ENCODE measurements at regions of chr14 and their contacts with region 1.

Region 1: DNA sequence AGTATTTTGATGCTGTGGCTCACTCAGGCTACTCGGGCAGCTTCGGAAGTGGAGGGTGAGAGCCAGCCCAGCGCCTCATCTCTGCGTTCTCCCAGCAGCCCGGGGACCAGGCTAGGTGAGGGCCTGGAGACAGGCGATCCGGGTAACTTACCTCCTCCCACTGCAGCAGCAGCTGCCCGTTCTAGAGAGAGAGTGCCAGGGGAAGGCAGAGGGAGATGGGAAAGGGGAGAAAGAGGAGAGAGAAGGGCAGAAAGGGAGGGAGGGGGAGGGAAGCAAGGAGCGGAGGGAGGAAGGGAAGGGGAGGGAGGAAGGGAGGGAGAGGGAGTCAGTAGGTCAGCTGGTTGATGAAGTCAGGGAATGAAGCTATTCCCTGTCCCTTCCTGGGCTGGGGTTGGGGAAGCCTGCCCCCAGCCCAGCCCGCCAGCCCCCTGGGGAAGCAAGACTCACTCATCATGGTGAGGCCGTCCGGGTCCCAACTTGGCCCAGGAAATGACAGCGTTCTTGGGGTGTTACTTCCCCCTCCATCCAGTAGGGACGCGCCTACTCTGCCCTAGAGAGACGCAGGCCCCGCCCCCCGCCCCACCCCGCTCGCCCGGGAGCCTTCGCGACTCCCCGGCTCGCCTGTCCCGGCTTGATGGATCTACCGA is at the start of gene IFI27L2:
- DNase-seq: peak; percentile 59
- H3K4me3 ChIP-seq: peak within 1 kb of the TSS; percentile 27 to 67 (median 45)
- H3K27ac ChIP-seq: no peak within 1 kb of the TSS
- H3K4me1 ChIP-seq: peaks cover 9% of the 10 kb centered on the region
- H3K27me3 ChIP-seq: peaks cover 0 to 5% of the 10 kb centered on the region in 2 experiments
- CTCF ChIP-seq: peak in 1 of 2 donors; percentile 20
- POLR2A ChIP-seq: no peak
- total RNA-seq, gene IFI27L2: 11.0 and 28.7 TPM in 2 replicates

Region 2: GRCh38 chr14:94026173-94026888 is 102.9 kb before region 1 on chr14 and contains the start of gene OTUB2:
- CTCF ChIA-PET with region 1: interaction called, 16 read pairs
- POLR2A ChIA-PET with region 1: no interaction called
- dilution Hi-C with region 1: no loop called
- intact Hi-C with region 1: no loop called
- DNase-seq: peak; percentile 99
- H3K4me3 ChIP-seq: peak within 1 kb of the TSS in 2 of 3 experiments; percentile 29 to 50
- H3K27ac ChIP-seq: no peak within 1 kb of the TSS
- H3K4me1 ChIP-seq: peaks cover 10% of the 10 kb centered on the region
- H3K27me3 ChIP-seq: peaks cover 0 to 4% of the 10 kb centered on the region in 2 experiments
- CTCF ChIP-seq: no peak
- POLR2A ChIP-seq: no peak
- total RNA-seq, gene OTUB2: 1.1 and 1.6 TPM in 2 replicates

Region 3: DNA sequence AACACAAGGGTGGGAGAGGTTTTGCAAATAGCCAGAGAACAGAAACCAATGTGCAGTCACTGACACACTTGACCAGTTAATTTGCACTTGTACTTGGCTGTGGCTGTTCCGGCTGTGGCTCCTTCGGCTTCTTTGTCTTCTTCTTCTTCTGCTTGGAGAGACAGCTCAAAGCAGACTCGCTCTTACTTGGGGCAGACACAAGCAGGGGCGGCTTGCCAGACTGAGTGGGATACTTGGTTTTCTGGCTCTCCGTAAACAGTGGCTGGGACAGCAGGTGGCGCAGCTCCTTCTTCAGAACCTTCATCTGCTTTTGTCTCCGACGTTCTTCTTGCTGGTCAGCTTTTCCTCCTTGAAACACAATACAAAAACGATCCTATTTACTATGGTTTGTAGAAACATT is 78.1 kb before region 1 on chr14:
- CTCF ChIA-PET with region 1: interaction called, 22 read pairs
- POLR2A ChIA-PET with region 1: interaction called, 5 read pairs
- dilution Hi-C with region 1: no loop called
- intact Hi-C with region 1: no loop called
- DNase-seq: peak; percentile 40
- H3K4me3 ChIP-seq: no peak overlapping the region
- H3K27ac ChIP-seq: no peak overlapping the region
- H3K4me1 ChIP-seq: peaks cover 3% of the 10 kb centered on the region
- H3K27me3 ChIP-seq: no peaks in the 10 kb centered on the region
- CTCF ChIP-seq: peak in 1 of 2 donors; percentile 59
- POLR2A ChIP-seq: no peak

Region 4: GRCh38 chr14:94080471-94081289 is 48.6 kb before region 1 on chr14 and contains the start of gene DDX24:
- CTCF ChIA-PET with region 1: interaction called, 15 read pairs
- POLR2A ChIA-PET with region 1: interaction called, 4 read pairs
- dilution Hi-C with region 1: no loop called
- intact Hi-C with region 1: loop called (anchors 1 kb)
- DNase-seq: peak; percentile 97
- H3K4me3 ChIP-seq: peak within 1 kb of the TSS; percentile 67 to 88 (median 82)
- H3K27ac ChIP-seq: peak within 1 kb of the TSS; percentile 80
- H3K4me1 ChIP-seq: peaks cover 29% of the 10 kb centered on the region
- H3K27me3 ChIP-seq: no peaks in the 10 kb centered on the region
- CTCF ChIP-seq: no peak
- POLR2A ChIP-seq: peak; percentile 95
- total RNA-seq, gene DDX24: 132 and 141 TPM in 2 replicates

Region 5: GRCh38 chr14:94143239-94143638 is 14.0 kb after region 1 on chr14:
- CTCF ChIA-PET with region 1: interaction called, 46 read pairs
- POLR2A ChIA-PET with region 1: interaction called, 3 read pairs
- dilution Hi-C with region 1: no loop called
- intact Hi-C with region 1: no loop called
- DNase-seq: no peak
- H3K4me3 ChIP-seq: no peak overlapping the region
- H3K27ac ChIP-seq: no peak overlapping the region
- H3K4me1 ChIP-seq: no peaks in the 10 kb centered on the region
- H3K27me3 ChIP-seq: no peaks in the 10 kb centered on the region
- CTCF ChIP-seq: peak in 1 of 2 donors; percentile 23
- POLR2A ChIP-seq: no peak

Region 6: DNA sequence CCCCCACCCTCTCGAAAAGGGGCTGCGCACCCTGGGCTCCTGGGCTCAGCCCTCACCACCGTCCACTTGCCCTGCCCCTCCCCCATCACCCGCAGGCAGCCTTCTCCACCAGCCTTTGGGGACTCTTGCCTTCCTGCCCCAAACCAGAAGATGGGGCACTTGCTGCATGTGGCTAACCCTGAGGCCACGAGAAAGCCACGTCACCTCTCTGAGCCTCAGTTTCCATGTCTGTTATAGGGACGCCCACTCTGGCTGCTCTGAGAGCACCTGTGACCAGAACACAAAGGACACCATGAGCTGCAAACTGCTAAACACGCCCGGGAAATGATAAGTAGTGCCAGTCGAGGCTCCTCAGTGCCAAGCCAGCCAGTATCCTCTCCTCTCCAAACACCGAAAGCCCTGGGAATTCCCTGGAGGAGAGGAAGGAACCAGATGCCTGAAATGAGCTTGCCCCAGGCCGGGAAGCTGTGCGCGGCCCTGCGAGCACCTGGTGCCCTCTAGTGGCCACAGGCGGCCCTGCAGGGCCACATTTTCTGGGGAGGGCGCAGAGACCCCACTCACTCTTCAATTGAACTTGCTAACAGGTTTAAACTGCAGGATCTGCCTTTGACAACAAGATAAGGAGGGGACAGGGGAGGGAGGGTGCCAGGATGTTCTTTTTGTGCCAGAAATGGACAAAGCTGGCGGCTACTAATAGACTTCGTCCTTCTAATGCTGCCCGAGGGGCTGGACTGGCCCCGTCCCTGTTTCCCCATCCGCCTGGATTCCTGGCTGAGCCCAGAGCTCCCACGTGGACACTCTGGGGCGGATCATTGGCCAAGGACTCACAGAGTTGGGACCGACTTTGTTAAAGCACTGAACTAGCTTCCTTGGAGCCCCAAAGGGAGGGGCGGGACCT is 357.0 kb after region 1 on chr14:
- CTCF ChIA-PET with region 1: interaction called, 3 read pairs
- POLR2A ChIA-PET with region 1: no interaction called
- dilution Hi-C with region 1: no loop called
- intact Hi-C with region 1: loop called (anchors 2 kb)
- DNase-seq: peak; percentile 24
- H3K4me3 ChIP-seq: no peak overlapping the region
- H3K27ac ChIP-seq: no peak overlapping the region
- H3K4me1 ChIP-seq: no peaks in the 10 kb centered on the region
- H3K27me3 ChIP-seq: no peaks in the 10 kb centered on the region
- CTCF ChIP-seq: peak; percentile 93 to 95
- POLR2A ChIP-seq: no peak